ENCODE measurements at regions of chr9 and their contacts with region 1.

Region 1: GRCh38 chr9:72586388-72587130 is 65.2 kb downstream of the TMC1 start:
- DNase-seq: no peak
- ATAC-seq: peak in 3 of 4 donors; percentile 41 to 68 (median 48)
- H3K4me3 ChIP-seq: no peak overlapping the region
- H3K27ac ChIP-seq: peak overlapping the region in 1 of 12 donors; percentile 35
- H3K4me1 ChIP-seq: peaks cover 0 to 51% (median 0%) of the 10 kb centered on the region in 12 donors
- H3K27me3 ChIP-seq: no peaks in the 10 kb centered on the region
- CTCF ChIP-seq: no peak
- POLR2A ChIP-seq: no peak

Region 2: GRCh38 chr9:72526901-72527800 is 59.4 kb before region 1 on chr9:
- intact Hi-C with region 1: loop called in 2 of 10 experiments (anchors 5 to 10 kb)
- DNase-seq: peak; percentile 44 to 77 (median 69)
- ATAC-seq: peak; percentile 90 to 95 (median 92)
- H3K4me3 ChIP-seq: peak overlapping the region in 10 of 12 donors; percentile 4 to 44 (median 32)
- H3K27ac ChIP-seq: peak overlapping the region in 7 of 12 donors; percentile 1 to 66 (median 49)
- H3K4me1 ChIP-seq: peaks cover 0 to 27% (median 15%) of the 10 kb centered on the region in 12 donors
- H3K27me3 ChIP-seq: no peaks in the 10 kb centered on the region
- CTCF ChIP-seq: no peak
- POLR2A ChIP-seq: no peak